ENCODE measurements at regions of chr3 and their contacts with region 1.

Region 1: GRCh38 chr3:150495563-150496168 is 50.6 kb downstream of the SERP1 start:
- DNase-seq: no peak
- ATAC-seq: peak; percentile 78
- H3K4me3 ChIP-seq: no peak overlapping the region
- H3K27ac ChIP-seq: no peak overlapping the region
- H3K4me1 ChIP-seq: no peaks in the 10 kb centered on the region
- H3K27me3 ChIP-seq: no peaks in the 10 kb centered on the region
- CTCF ChIP-seq: peak; percentile 53 to 72 (median 58)
- EP300 ChIP-seq: no peak
- POLR2A ChIP-seq: no peak
- RAD21 ChIP-seq: peak; percentile 91

Region 2: GRCh38 chr3:150202711-150203110 is 293.0 kb before region 1 on chr3:
- CTCF ChIA-PET with region 1: no interaction called
- POLR2A ChIA-PET with region 1: no interaction called
- RAD21 ChIA-PET with region 1: no interaction called
- SMC1A ChIA-PET with region 1: no interaction called
- in situ Hi-C with region 1: no loop called
- intact Hi-C with region 1: no loop called
- DNase-seq: no peak
- ATAC-seq: no peak
- H3K4me3 ChIP-seq: no peak overlapping the region
- H3K27ac ChIP-seq: no peak overlapping the region
- H3K4me1 ChIP-seq: no peaks in the 10 kb centered on the region
- H3K27me3 ChIP-seq: no peaks in the 10 kb centered on the region
- CTCF ChIP-seq: no peak
- EP300 ChIP-seq: no peak
- POLR2A ChIP-seq: no peak
- RAD21 ChIP-seq: no peak

Region 3: DNA sequence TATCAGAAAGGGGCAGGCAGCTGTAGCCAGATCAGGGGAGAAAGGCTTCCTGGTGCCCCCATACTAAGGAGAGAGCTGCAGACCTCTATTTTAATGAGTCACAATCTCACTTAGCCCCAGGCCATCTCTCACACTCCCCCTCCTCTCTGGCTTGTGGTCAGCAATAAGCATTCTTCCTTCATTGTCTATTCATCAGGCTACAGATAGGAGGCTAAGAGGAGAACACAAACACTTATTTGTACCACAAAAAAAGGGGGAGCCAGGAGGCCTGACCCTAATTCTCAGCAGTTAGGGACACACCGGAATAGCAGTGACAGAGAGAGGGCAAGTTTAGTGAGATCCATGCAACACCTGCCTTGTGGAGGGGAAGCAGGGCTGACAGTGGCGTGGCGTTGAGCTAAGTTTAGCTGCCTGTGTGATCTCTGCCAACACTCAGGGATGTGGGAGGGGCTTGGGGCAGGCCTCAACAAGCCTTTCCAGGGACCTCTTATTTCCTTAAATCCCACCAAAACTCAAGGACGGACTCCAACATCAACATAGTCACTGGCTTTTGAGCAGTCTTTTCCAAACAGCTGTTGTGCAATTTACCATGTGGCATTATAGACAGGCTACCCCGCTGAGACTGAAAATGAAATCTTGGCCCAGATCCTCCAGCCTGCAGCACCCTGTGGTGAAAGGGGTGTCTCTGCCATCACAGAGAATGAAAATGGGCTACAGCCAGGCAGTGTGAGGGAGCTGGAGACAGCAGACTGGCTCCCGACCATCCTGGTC is 279.4 kb before region 1 on chr3:
- CTCF ChIA-PET with region 1: interaction called, 15 read pairs
- POLR2A ChIA-PET with region 1: no interaction called
- RAD21 ChIA-PET with region 1: interaction called, 6 read pairs
- SMC1A ChIA-PET with region 1: interaction called, 13 read pairs
- in situ Hi-C with region 1: no loop called
- intact Hi-C with region 1: no loop called
- DNase-seq: no peak
- ATAC-seq: no peak; the same call in 1 of the 3 replicates
- H3K4me3 ChIP-seq: no peak overlapping the region
- H3K27ac ChIP-seq: no peak overlapping the region
- H3K4me1 ChIP-seq: no peaks in the 10 kb centered on the region
- H3K27me3 ChIP-seq: no peaks in the 10 kb centered on the region
- CTCF ChIP-seq: no peak
- EP300 ChIP-seq: no peak
- POLR2A ChIP-seq: no peak
- RAD21 ChIP-seq: no peak

Region 4: GRCh38 chr3:150238998-150239619 is 256.6 kb before region 1 on chr3:
- CTCF ChIA-PET with region 1: interaction called, 71 read pairs
- POLR2A ChIA-PET with region 1: interaction called, 3 read pairs
- RAD21 ChIA-PET with region 1: interaction called, 17 read pairs
- SMC1A ChIA-PET with region 1: interaction called, 23 read pairs
- in situ Hi-C with region 1: no loop called
- intact Hi-C with region 1: no loop called
- DNase-seq: no peak
- ATAC-seq: no peak
- H3K4me3 ChIP-seq: no peak overlapping the region
- H3K27ac ChIP-seq: no peak overlapping the region
- H3K4me1 ChIP-seq: no peaks in the 10 kb centered on the region
- H3K27me3 ChIP-seq: peaks cover 0 to 4% of the 10 kb centered on the region in 2 experiments; a peak in 1 of 4 replicates
- CTCF ChIP-seq: peak; percentile 17 to 50 (median 19); a peak in 3 of 6 replicates
- EP300 ChIP-seq: no peak
- POLR2A ChIP-seq: no peak
- RAD21 ChIP-seq: peak; percentile 38

Region 5: GRCh38 chr3:150293401-150294061 is 202.1 kb before region 1 on chr3:
- CTCF ChIA-PET with region 1: interaction called, 8 read pairs
- POLR2A ChIA-PET with region 1: no interaction called
- RAD21 ChIA-PET with region 1: interaction called, 10 read pairs
- SMC1A ChIA-PET with region 1: interaction called, 18 read pairs
- in situ Hi-C with region 1: loop called (anchors 5 kb)
- intact Hi-C with region 1: no loop called
- DNase-seq: no peak
- ATAC-seq: no peak
- H3K4me3 ChIP-seq: no peak overlapping the region
- H3K27ac ChIP-seq: no peak overlapping the region
- H3K4me1 ChIP-seq: no peaks in the 10 kb centered on the region
- H3K27me3 ChIP-seq: no peaks in the 10 kb centered on the region
- CTCF ChIP-seq: no peak
- EP300 ChIP-seq: no peak
- POLR2A ChIP-seq: no peak
- RAD21 ChIP-seq: no peak

Region 6: DNA sequence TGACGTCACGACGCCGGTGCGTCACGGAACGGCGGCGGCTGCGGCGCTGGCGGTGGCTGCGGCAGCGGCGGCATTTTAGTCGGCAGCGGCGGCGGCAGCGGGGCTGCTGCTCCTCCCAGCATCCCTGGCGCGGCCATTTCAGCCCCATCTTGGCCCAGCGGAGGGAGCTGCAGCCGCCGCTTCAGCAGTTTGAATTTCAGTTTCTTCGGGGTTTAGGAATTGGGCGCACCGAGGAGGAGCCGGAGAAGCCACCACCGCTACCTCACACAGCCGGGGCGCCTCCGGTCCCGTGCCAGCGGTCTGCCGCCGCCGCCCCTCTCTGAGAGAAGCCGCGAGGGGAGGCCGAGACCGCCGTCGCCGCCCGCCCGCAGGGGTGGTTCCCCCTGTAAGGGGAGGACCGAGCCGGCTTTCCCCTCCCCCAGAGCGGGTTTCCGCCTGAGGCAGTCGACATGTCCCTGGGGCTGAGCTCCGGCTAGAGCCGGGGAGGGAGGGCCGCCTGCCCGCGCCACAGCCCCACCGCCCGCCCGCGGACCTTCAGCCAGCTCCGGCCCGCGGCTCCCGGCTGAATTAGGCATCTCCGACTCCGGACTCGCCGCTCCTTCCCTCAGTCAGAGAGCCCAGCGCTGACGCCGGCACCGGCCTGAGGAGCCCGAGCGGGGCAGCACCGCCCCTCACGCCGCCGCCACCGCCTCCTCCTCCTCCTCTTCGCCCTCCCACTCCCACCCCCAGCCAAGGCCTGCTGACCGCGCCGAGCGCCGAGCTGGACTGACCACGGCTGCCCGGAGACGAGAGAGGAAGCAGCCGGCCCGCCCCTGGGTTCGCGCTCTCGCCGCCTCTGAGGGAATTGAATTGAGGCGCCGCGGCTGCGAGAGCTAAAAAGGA is 87.2 kb before region 1 on chr3 and contains the start of gene TSC22D2:
- CTCF ChIA-PET with region 1: interaction called, 23 read pairs
- POLR2A ChIA-PET with region 1: no interaction called
- RAD21 ChIA-PET with region 1: interaction called, 22 read pairs
- SMC1A ChIA-PET with region 1: interaction called, 36 read pairs
- in situ Hi-C with region 1: no loop called
- intact Hi-C with region 1: loop called (anchors 5 kb)
- DNase-seq: peak; percentile 69
- ATAC-seq: peak; percentile 73
- H3K4me3 ChIP-seq: peak within 1 kb of the TSS; percentile 96
- H3K27ac ChIP-seq: peak within 1 kb of the TSS; percentile 92
- H3K4me1 ChIP-seq: no peaks in the 10 kb centered on the region
- H3K27me3 ChIP-seq: no peaks in the 10 kb centered on the region
- CTCF ChIP-seq: no peak
- EP300 ChIP-seq: peak; percentile 9 to 57; a peak in 1 of 4 replicates
- POLR2A ChIP-seq: peak; percentile 77
- RAD21 ChIP-seq: no peak
- polyA plus RNA-seq, gene TSC22D2: 10.5 to 19.4 TPM

Region 7: DNA sequence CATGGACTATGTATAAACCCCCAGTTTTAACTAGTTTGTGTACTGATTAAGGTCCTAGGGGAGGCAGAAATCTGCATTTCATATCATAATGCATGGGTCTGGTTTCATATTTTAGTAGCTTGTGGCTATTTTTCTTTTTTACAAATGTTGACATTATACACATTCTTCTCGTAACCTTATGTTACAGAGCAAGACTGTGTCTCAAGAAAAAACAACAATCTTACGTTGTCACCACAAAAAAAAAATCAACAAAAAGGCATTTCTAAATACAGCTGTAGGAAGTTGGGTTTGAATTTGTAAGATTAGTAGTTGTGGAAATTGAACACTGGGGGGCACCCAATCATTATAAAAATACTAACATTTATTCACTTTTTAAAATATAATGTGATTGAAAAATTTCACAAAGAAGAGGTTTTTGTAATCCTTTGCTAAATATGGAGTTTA is 32.7 kb after region 1 on chr3:
- CTCF ChIA-PET with region 1: no interaction called
- POLR2A ChIA-PET with region 1: no interaction called
- RAD21 ChIA-PET with region 1: no interaction called
- SMC1A ChIA-PET with region 1: no interaction called
- in situ Hi-C with region 1: no loop called
- intact Hi-C with region 1: no loop called
- DNase-seq: no peak
- ATAC-seq: peak; percentile 54
- H3K4me3 ChIP-seq: no peak overlapping the region
- H3K27ac ChIP-seq: no peak overlapping the region
- H3K4me1 ChIP-seq: no peaks in the 10 kb centered on the region
- H3K27me3 ChIP-seq: no peaks in the 10 kb centered on the region
- CTCF ChIP-seq: peak; percentile 13 to 48 (median 33); a peak in 4 of 6 replicates
- EP300 ChIP-seq: no peak
- POLR2A ChIP-seq: no peak
- RAD21 ChIP-seq: peak; percentile 48

Measured in GM12878 (cell line).